ENCODE measurements at regions of chr2 and their contacts with region 1.

Region 1: DNA sequence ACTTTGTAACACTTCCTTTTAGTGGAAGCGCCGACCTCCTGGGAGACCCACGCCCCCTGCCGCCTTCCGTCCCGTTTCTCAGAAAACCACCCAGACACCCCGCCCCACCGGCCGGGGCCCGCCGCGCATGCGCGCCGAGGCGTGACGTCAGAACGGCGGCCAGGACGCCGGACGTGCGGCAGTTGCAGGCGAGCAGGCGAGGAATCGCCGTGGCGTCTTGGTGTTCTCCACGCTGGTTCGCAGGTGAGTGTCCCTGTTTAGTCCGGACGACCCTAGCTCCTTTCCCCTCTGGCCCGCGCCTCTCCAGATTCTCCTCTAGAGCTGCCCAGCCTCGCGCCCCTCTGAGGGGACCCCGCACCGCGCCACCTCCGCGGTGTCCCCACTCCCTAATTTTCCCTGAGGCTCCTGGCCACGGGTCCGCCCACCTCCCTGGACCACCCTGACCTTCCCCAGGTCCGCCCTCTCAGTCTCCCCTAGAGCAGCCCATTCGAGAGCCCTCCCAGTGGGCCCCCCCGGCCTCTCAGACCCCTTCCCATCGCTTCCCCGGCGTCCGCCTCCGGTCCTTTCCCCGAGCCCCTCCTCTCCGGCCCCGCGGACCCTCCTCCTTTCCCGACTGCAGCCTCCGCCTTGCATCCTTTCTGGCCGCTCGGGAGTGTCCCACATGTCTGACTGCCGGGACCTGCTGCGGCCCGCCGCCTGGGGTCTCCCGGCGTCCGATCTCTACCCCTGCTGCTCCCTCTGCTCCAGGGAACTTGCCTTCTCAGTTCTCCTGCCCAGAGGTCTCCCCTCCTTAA is at the start of gene PLEKHB2:
- DNase-seq: peak; percentile 97
- total RNA-seq, gene PLEKHB2: 41.3 TPM

Region 2: DNA sequence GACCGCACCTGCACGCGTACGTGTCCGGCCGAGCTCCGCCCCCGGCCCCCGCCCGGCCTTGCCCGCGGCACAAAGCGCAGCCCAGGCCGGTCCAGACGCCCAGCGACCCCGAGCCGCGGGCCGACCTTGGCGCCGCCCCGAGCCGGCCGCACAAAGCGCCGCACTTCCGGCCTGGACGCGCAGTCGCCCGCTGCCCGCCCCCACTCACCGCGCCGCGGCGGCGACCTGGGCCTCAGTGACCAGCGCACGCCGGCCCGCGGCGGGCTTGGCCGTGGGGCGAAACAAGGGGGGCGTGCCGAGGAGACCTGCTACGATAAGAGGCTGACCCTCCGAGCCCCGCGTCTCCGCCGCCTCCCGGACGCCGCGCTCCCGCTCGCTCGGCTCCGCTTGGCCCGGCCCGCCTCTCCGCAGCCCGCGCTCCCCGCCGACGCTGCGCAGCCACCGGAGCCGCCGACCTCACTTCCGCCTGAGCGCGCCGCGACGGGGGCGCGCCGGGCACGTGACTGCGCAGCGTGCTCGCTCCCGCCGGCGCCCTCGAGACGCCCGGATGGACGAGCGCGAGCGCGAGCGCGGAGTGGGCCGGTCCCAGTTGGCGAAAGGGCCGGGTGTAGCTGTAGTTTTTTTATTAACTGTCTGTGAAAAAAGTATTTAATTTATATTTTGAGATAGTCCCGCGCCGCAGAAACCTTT is 12.2 kb before region 1 on chr2 and contains the start of gene FAM168B:
- intact Hi-C with region 1: loop called (anchors 1 kb)
- DNase-seq: peak; percentile 95
- total RNA-seq, gene FAM168B: 90.3 TPM

Region 3: GRCh38 chr2:131154071-131154531 is 48.7 kb after region 1 on chr2:
- intact Hi-C with region 1: no loop called
- DNase-seq: no peak

Measured in cardiac septum (tissue), 1 donor.